Right ventricle myocardium inferior (tissue), 1 donor: ENCODE measurements at regions of chr6 and their contacts with region 1.

Region 1: DNA sequence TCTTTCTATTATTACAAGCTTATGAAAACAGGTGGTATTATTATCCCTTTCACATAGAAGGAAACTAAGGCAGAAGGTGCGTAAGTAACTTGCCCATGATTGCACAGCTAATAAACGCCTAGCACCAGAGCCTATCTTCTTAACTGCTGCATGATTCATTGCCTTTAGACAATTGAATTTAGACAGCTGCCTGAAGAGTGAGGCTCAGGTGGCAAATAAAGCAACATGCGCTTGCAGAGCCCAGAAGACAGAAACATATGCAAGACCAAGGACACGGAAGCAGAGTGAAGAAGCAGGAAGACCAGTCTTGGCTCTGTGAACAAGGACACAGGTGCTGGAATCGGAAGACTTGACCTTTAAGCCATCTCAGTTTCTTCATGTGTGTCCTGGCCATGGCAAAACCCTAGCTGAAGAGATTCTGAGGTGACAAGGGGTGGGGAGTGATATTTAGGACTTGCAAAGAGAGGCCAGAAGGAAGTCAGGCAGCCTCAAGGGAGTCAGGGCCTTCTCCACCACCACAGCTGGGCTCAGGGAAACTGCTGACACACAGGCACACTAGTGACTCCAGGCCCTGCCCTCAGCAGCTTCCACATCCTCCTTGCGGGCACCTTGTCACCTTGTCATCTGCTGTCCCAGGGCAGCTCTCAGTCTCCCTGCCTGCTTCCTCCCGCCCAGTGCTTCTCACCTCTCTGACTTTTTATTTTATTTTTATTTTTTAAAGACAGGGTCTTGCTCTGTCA is 91.7 kb upstream of the SLC22A16 start:
- DNase-seq: no peak
- ATAC-seq: no peak

Region 2: GRCh38 chr6:110368284-110368683 is 199.8 kb before region 1 on chr6:
- intact Hi-C with region 1: no loop called
- DNase-seq: no peak
- ATAC-seq: no peak

Region 3: DNA sequence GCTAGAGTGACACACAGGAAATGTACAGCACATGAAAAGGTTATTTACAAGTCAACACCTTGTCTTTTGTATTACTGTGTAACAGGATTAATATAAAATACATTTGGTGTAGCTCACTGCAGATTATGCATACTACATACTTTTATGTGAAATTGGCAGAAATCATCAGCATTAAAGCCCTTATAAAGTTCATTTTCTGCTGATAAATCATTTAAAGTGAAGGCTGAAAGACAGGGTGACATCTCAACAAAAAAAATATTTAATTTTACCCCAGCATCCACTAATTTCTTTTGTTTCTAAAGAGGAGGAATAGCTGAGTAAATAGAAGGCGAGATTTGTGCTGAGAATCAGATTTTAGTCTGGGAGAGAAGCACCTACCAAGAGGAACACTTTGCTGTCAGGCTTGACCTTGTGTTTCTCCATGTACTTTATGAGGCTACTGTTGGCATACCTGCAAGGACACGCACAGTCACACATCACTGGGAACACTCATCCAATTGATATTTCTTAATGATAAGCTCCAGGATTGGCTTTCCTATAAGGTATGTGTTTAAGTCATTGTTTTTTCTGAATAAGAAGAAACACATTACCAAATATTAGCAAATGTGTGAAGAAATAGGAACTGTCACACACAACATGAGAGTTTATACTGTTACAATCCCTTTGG is 54.9 kb after region 1 on chr6:
- intact Hi-C with region 1: loop called (anchors 5 kb)
- DNase-seq: no peak
- ATAC-seq: peak; percentile 33